ENCODE measurements at regions of chr12 and their contacts with region 1.

Region 1: DNA sequence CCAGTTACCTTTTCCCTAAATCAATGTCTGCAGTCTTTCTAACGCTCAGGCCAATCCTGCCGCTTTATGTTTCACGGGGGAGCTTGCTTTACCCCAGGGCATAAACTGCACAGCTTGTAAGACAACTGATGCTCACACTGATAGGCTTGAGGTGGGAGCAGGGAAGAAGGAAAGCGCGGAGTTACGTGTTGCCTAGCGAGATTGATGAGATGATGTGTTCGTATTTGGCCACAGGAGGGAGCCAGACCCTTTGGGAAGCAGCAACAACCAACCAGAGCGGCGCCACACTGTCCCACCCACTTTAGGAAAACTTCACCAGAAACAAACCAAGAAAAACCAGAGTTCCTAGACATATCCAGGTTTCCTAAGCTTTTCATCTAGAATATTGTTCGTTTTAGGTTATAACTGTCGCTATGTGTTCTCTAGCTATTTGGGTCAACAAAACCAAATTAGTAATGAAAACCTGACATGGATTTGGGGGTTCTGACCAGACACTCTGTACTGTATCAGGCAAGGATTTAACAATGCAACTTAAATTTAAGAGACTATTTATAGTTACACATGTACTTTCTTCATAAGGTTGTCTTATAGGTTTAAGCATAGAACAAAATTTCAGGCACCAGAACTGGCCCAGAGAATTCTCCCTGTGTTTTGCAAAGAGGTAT is 2.4 kb downstream of the IL26 start:
- DNase-seq: peak; percentile 86
- ATAC-seq: peak; percentile 92
- H3K4me3 Mint-ChIP-seq: peak overlapping the region; percentile 20
- H3K27ac Mint-ChIP-seq: peak overlapping the region; percentile 53
- H3K4me1 Mint-ChIP-seq: peaks cover 11% of the 10 kb centered on the region
- H3K27me3 Mint-ChIP-seq: peaks cover 2% of the 10 kb centered on the region
- CTCF ChIP-seq: peak; percentile 96

Region 2: DNA sequence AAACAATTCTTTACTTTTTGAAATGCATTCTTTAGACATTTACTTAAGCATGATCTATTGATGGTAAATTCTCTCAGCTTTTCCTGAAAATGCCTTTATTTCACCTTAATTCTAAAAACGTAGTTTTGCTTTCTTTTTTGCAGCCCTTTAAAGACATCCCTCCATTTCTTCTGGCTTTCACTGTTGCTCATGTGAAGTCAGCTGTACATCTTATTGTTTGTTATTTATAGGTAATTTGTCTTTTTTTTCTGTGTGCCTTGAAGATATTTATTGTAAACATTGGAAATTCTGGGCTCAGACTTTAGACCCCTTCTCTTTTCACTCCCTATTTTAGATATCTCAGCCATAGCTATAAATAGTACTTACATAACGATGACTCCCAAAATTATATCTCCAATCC is 134.1 kb before region 1 on chr12:
- CTCF ChIA-PET with region 1: no interaction called
- POLR2A ChIA-PET with region 1: no interaction called
- intact Hi-C with region 1: no loop called
- DNase-seq: no peak
- ATAC-seq: no peak
- H3K4me3 Mint-ChIP-seq: no peak overlapping the region
- H3K27ac Mint-ChIP-seq: no peak overlapping the region
- H3K4me1 Mint-ChIP-seq: peaks cover 2% of the 10 kb centered on the region
- H3K27me3 Mint-ChIP-seq: no peaks in the 10 kb centered on the region
- CTCF ChIP-seq: no peak

Region 3: DNA sequence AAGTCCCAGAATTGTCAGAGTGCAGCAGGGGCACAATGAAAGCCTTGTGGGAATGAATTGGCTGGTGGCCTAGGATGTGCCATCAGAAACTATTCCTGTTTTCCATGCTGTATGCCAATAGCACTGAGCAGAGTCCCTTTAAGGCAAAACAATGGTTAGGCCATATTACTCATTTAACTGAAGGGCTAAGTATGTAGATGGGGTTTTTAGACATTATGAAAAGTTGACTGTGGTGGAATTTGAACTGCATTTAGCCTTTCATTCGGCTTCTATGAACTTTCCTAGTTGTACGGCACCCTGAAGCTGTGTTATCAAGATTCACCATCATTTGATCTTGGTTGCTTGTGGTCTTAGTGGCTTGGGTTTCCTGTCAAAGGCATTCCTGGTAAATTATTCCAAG is 22.4 kb before region 1 on chr12:
- CTCF ChIA-PET with region 1: no interaction called
- POLR2A ChIA-PET with region 1: no interaction called
- intact Hi-C with region 1: no loop called
- DNase-seq: no peak
- ATAC-seq: peak; percentile 49
- H3K4me3 Mint-ChIP-seq: no peak overlapping the region
- H3K27ac Mint-ChIP-seq: no peak overlapping the region
- H3K4me1 Mint-ChIP-seq: peaks cover 45% of the 10 kb centered on the region
- H3K27me3 Mint-ChIP-seq: no peaks in the 10 kb centered on the region
- CTCF ChIP-seq: no peak

Region 4: DNA sequence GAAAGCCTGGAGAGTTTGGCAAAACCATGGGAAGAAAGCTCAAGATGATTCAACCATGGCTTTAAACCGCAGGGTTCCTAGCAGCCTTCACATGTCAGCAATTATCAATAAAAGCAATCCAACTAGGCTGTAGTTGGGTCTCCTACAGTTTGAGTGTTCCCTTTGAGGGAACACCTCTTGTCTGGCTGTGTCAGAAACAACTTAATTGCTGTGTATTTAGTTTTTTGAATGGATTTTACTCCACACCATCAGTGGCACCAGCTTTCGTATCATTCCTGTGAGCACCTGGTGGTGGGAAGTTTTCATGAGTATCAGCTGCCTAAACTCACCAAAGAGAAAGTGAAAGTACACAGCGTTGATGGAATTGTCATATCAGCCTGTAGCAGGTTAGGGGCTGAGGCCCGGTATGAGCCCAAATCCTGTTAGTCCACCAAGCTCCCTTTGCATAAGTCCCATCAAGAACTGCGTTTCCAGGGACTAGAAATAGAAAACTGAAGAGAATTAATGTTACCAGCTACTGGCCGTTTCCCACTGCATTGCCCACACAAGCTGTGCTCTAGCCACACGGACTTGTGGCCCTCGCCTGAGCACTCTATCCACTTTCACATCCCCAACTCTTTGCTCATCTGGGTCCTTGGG is 13.3 kb after region 1 on chr12:
- CTCF ChIA-PET with region 1: interaction called, 31 read pairs
- POLR2A ChIA-PET with region 1: interaction called, 4 read pairs
- intact Hi-C with region 1: no loop called
- DNase-seq: peak; percentile 54
- ATAC-seq: peak; percentile 56
- H3K4me3 Mint-ChIP-seq: peak overlapping the region; percentile 76
- H3K27ac Mint-ChIP-seq: peak overlapping the region; percentile 86
- H3K4me1 Mint-ChIP-seq: peaks cover 55% of the 10 kb centered on the region
- H3K27me3 Mint-ChIP-seq: no peaks in the 10 kb centered on the region
- CTCF ChIP-seq: no peak

Region 5: GRCh38 chr12:68290126-68290525 is 66.9 kb after region 1 on chr12:
- CTCF ChIA-PET with region 1: interaction called, 13 read pairs
- POLR2A ChIA-PET with region 1: interaction called, 4 read pairs
- intact Hi-C with region 1: no loop called
- DNase-seq: peak; percentile 50
- ATAC-seq: peak; percentile 94
- H3K4me3 Mint-ChIP-seq: no peak overlapping the region
- H3K27ac Mint-ChIP-seq: no peak overlapping the region
- H3K4me1 Mint-ChIP-seq: peaks cover 42% of the 10 kb centered on the region
- H3K27me3 Mint-ChIP-seq: peaks cover 4% of the 10 kb centered on the region
- CTCF ChIP-seq: no peak

Region 6: GRCh38 chr12:68317047-68317667 is 93.9 kb after region 1 on chr12:
- CTCF ChIA-PET with region 1: interaction called, 146 read pairs
- POLR2A ChIA-PET with region 1: interaction called, 5 read pairs
- intact Hi-C with region 1: loop called (anchors 1 kb)
- DNase-seq: peak; percentile 68
- ATAC-seq: no peak
- H3K4me3 Mint-ChIP-seq: no peak overlapping the region
- H3K27ac Mint-ChIP-seq: no peak overlapping the region
- H3K4me1 Mint-ChIP-seq: no peaks in the 10 kb centered on the region
- H3K27me3 Mint-ChIP-seq: no peaks in the 10 kb centered on the region
- CTCF ChIP-seq: peak; percentile 82